CD14-positive monocyte (primary cell): ENCODE measurements at regions of chr9 and their contacts with region 1.

Region 1: DNA sequence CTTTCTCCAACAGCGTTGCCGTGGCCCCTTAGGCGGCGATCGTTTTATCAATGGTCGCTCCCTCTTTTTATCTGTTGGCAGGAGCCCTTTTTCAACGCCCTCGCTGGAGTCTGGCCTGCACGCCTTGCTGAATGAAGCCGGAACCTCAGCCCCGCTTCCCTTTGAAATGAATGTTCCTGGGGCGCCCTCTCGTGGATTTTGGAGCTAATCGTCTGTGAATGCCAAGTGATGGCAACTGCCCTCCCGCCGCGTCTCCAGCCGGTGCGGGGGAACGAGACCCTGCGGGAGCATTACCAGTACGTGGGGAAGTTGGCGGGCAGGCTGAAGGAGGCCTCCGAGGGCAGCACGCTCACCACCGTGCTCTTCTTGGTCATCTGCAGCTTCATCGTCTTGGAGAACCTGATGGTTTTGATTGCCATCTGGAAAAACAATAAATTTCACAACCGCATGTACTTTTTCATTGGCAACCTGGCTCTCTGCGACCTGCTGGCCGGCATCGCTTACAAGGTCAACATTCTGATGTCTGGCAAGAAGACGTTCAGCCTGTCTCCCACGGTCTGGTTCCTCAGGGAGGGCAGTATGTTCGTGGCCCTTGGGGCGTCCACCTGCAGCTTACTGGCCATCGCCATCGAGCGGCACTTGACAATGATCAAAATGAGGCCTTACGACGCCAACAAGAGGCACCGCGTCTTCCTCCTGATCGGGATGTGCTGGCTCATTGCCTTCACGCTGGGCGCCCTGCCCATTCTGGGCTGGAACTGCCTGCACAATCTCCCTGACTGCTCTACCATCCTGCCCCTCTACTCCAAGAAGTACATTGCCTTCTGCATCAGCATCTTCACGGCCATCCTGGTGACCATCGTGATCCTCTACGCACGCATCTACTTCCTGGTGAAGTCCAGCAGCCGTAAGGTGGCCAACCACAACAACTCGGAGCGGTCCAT is 10.0 kb downstream of the S1PR3 start:
- DNase-seq: peak; percentile 70 to 74 (median 71)
- H3K4me3 ChIP-seq: no peak overlapping the region
- H3K4me3 Mint-ChIP-seq: peak overlapping the region; percentile 34 to 39
- H3K27ac ChIP-seq: no peak overlapping the region
- H3K27ac Mint-ChIP-seq: peak overlapping the region in 5 of 7 donors; percentile 47 to 81 (median 57)
- H3K4me1 ChIP-seq: peaks cover 24 to 34% of the 10 kb centered on the region in 2 donors
- H3K4me1 Mint-ChIP-seq: peaks cover 37% of the 10 kb centered on the region
- H3K27me3 ChIP-seq: no peaks in the 10 kb centered on the region
- H3K27me3 Mint-ChIP-seq: peaks cover 0 to 5% (median 0%) of the 10 kb centered on the region in 3 donors
- CTCF ChIP-seq: peak; percentile 78

Region 2: DNA sequence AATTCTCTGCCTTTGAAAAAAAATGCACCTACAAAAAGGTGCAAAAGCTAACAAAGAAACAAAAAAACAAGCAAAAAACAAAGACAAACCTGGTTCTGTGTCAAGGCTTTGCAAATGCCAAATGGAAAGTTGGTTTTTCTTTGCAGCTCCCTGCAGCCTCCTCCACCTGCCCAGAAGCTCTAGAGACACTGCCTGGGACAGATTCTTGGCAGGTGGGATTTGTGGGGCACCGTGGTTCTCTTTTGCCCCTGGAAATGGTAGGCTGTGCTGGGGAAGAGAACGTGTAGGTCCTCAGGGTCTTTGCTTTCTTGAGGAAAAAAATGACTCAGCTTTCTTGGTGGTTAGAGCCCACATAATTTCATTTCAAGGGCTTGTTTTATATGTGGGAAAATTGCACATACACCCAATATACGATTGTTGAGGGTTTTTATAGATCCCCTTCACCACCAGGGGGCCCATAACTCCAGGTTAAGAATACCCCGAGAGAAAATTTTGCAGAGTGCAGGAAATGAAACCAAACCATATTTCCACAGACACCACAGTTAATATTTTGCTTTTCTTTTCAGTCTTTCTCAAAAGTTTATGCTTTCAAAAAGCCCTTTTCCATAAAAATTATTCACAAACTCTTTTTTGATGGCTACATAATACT is 407.6 kb before region 1 on chr9:
- intact Hi-C with region 1: loop called (anchors 2 to 5 kb)
- DNase-seq: peak; percentile 26 to 50 (median 45)
- H3K4me3 ChIP-seq: no peak overlapping the region
- H3K4me3 Mint-ChIP-seq: no peak overlapping the region
- H3K27ac ChIP-seq: no peak overlapping the region
- H3K27ac Mint-ChIP-seq: no peak overlapping the region
- H3K4me1 ChIP-seq: no peaks in the 10 kb centered on the region
- H3K4me1 Mint-ChIP-seq: peaks cover 13% of the 10 kb centered on the region
- H3K27me3 ChIP-seq: no peaks in the 10 kb centered on the region
- H3K27me3 Mint-ChIP-seq: no peaks in the 10 kb centered on the region
- CTCF ChIP-seq: peak; percentile 80

Region 3: DNA sequence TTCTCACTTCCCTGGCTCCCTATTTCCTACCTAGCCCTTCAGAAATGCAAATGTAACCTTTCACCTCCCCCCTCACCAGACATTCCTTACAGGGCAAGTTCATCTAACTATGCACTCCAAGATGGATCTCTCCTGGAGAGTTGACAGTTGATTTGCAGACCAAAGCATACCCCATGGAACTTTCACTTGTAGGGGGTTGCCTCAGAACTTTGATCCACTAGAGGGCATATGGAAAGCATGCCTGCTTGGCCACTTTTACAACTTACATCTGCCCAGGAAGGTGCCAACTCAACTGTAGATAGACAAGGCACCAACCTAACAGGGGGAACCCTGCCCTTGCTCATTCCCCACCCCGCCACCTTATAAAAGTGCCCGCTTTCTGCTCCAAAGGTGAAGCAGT is 278.5 kb before region 1 on chr9:
- intact Hi-C with region 1: loop called (anchors 5 to 10 kb)
- DNase-seq: no peak
- H3K4me3 ChIP-seq: no peak overlapping the region
- H3K4me3 Mint-ChIP-seq: no peak overlapping the region
- H3K27ac ChIP-seq: no peak overlapping the region
- H3K27ac Mint-ChIP-seq: no peak overlapping the region
- H3K4me1 ChIP-seq: no peaks in the 10 kb centered on the region
- H3K4me1 Mint-ChIP-seq: no peaks in the 10 kb centered on the region
- H3K27me3 ChIP-seq: peaks cover 7 to 11% of the 10 kb centered on the region in 2 donors
- H3K27me3 Mint-ChIP-seq: peaks cover 8 to 30% (median 29%) of the 10 kb centered on the region in 3 donors
- CTCF ChIP-seq: peak; percentile 18

Region 4: DNA sequence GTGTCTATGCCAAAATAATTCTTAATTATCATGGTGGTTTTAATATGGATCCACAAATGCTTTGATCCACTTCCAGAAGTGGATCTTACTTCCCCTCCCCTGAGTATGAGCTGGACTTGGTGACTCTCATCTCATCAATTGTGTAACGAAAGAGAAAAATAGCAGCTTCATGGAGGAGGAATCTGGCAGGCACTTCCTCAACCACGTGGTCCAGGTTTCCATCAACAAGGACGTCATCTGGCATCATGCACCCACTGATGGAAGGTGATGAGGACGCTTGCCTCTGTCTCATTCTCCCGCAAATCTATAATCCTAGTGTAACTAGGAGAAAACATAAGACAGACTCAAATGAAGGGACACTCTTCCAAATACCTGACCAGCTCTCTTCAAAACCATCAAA is 64.6 kb before region 1 on chr9:
- intact Hi-C with region 1: no loop called
- DNase-seq: peak; percentile 86 to 96 (median 93)
- H3K4me3 ChIP-seq: peak overlapping the region in 1 of 3 experiments; percentile 39
- H3K4me3 Mint-ChIP-seq: no peak overlapping the region
- H3K27ac ChIP-seq: peak overlapping the region; percentile 72 to 90
- H3K27ac Mint-ChIP-seq: peak overlapping the region; percentile 90 to 99 (median 94)
- H3K4me1 ChIP-seq: peaks cover 47 to 57% of the 10 kb centered on the region in 2 donors
- H3K4me1 Mint-ChIP-seq: peaks cover 53% of the 10 kb centered on the region
- H3K27me3 ChIP-seq: no peaks in the 10 kb centered on the region
- H3K27me3 Mint-ChIP-seq: peaks cover 1 to 2% (median 2%) of the 10 kb centered on the region in 3 donors
- CTCF ChIP-seq: no peak